GM12878 (cell line): ENCODE measurements at regions of chr11 and their contacts with region 1.

Region 1: GRCh38 chr11:78715639-78716311 is 141.1 kb upstream of the NARS2 start:
- DNase-seq: no peak
- ATAC-seq: peak; percentile 90
- H3K4me3 ChIP-seq: no peak overlapping the region
- H3K27ac ChIP-seq: no peak overlapping the region
- H3K4me1 ChIP-seq: no peaks in the 10 kb centered on the region
- H3K27me3 ChIP-seq: peaks cover 0 to 1% of the 10 kb centered on the region in 2 experiments; a peak in 1 of 4 replicates
- CTCF ChIP-seq: peak; percentile 68 to 86 (median 79)
- EP300 ChIP-seq: no peak
- POLR2A ChIP-seq: no peak
- RAD21 ChIP-seq: peak; percentile 51

Region 2: DNA sequence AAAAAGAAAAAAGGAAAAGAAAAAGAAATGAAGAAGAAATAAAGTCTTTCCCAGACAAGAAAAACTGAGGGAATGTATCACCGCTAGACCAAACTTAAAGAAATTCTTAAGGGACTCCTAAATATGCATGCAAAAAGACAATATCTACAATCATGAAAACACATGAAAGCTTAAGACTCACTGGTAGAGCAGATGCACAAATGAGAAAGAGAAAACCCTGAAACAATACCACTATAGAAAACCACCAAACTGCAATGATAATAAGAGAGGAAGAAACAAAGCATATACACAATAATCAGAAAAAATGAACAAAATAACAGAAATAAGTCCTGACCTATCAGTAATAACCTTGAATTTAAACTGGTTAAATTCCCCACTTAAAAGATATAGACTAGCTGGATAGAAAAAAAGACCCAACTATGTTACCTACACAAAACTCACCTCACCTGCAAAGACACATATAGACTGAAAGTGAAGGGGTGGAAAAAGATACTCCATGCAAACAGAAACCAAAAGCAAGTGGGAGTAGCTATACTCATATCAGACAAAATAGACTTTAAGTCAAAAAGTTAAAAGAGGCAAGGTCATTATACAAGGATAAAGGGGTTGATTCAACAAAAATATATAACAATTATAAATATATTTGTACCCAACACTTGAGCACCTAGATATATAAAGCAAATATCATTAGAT is 79.8 kb before region 1 on chr11:
- CTCF ChIA-PET with region 1: interaction called, 10 read pairs
- POLR2A ChIA-PET with region 1: no interaction called
- RAD21 ChIA-PET with region 1: no interaction called
- SMC1A ChIA-PET with region 1: no interaction called
- in situ Hi-C with region 1: no loop called
- intact Hi-C with region 1: no loop called
- DNase-seq: no peak
- ATAC-seq: peak; percentile 54; the same call in 2 of the 3 replicates
- H3K4me3 ChIP-seq: no peak overlapping the region
- H3K27ac ChIP-seq: no peak overlapping the region
- H3K4me1 ChIP-seq: no peaks in the 10 kb centered on the region; the same call in 1 of the 2 replicates
- H3K27me3 ChIP-seq: no peaks in the 10 kb centered on the region
- CTCF ChIP-seq: no peak
- EP300 ChIP-seq: no peak
- POLR2A ChIP-seq: no peak
- RAD21 ChIP-seq: no peak

Region 3: DNA sequence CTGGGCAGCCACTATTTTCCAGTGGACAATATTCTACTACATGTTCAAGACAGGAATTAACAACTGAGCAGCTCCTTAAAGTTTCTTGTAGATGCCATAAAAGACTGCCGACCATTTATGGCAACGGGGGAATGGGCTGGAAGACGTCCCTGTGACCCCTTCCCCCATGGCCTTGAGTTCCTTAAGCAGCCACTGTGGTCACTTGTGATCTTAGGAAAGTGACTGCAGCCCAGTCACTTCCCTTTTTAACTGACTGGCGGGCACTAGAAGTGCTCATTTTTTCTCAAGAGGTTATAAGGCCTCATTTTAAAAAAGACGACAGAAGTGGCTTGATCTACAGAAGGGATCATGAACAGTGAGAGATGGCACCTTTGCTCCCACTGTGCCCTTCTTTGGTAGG is 12.0 kb after region 1 on chr11:
- CTCF ChIA-PET with region 1: interaction called, 27 read pairs
- POLR2A ChIA-PET with region 1: no interaction called
- RAD21 ChIA-PET with region 1: no interaction called
- SMC1A ChIA-PET with region 1: no interaction called
- in situ Hi-C with region 1: no loop called
- intact Hi-C with region 1: no loop called
- DNase-seq: no peak
- ATAC-seq: no peak
- H3K4me3 ChIP-seq: no peak overlapping the region
- H3K27ac ChIP-seq: no peak overlapping the region
- H3K4me1 ChIP-seq: no peaks in the 10 kb centered on the region
- H3K27me3 ChIP-seq: no peaks in the 10 kb centered on the region; a peak in 3 of 4 replicates
- CTCF ChIP-seq: no peak
- EP300 ChIP-seq: no peak
- POLR2A ChIP-seq: no peak
- RAD21 ChIP-seq: no peak

Region 4: GRCh38 chr11:78886616-78887015 is 170.8 kb after region 1 on chr11:
- CTCF ChIA-PET with region 1: no interaction called
- POLR2A ChIA-PET with region 1: no interaction called
- RAD21 ChIA-PET with region 1: no interaction called
- SMC1A ChIA-PET with region 1: no interaction called
- in situ Hi-C with region 1: no loop called
- intact Hi-C with region 1: no loop called
- DNase-seq: no peak
- ATAC-seq: no peak
- H3K4me3 ChIP-seq: no peak overlapping the region
- H3K27ac ChIP-seq: no peak overlapping the region
- H3K4me1 ChIP-seq: no peaks in the 10 kb centered on the region
- H3K27me3 ChIP-seq: peaks cover 0 to 2% of the 10 kb centered on the region in 2 experiments; a peak in 2 of 4 replicates
- CTCF ChIP-seq: no peak
- EP300 ChIP-seq: no peak
- POLR2A ChIP-seq: no peak
- RAD21 ChIP-seq: no peak